Upper lobe of right lung (tissue), 1 donor: ENCODE measurements at regions of chr2 and their contacts with region 1.

Region 1: DNA sequence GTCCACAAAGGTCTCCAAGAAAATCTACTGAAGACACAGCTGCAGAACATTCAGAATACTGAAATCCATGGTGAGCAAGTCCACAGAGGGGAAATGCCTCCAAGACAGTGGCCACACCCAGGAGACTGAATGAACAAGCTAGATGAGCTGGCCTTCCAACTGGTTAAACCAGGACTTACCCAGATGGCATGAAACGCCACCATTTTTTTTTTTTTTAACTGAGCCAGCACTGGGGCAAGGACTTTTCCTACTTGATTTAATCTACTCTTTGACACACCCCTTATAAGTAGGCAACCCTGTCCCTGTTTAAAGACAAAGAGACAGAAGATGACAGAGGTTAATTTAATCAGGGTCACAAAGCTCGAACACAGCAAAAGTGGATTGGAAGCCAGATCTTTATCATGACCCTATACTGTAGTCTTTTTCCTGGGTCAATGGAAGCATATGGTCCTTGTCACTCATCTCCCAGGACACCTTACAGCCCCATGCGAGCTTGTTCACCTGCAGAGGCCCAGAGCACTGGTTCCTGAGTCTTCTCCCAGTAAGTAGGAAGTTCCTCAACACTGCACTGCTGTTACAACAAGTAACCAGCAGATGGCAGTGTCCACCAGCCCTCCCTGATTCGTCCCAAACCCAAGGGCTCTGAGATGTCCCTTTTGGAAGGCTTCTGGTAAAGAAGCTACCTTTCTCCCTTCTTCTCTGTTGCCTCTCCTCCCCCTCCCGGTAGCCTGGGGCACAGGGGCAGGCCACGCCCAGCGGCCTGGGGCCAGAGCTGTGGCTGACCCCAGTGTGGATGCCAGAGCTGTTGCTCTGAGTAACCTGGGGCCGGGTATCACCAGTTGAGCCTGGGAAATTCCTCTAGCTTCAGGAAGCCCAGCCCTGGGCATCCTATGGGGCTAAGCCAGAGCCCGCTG is 5.6 kb upstream of the GDF7 start:
- DNase-seq: peak; percentile 72
- ATAC-seq: peak; percentile 92
- H3K4me3 ChIP-seq: no peak overlapping the region
- H3K27ac ChIP-seq: no peak overlapping the region
- H3K4me1 ChIP-seq: peaks cover 9% of the 10 kb centered on the region
- H3K27me3 ChIP-seq: peaks cover 46% of the 10 kb centered on the region
- CTCF ChIP-seq: peak; percentile 99

Region 2: GRCh38 chr2:20962939-20963557 is 301.7 kb after region 1 on chr2:
- intact Hi-C with region 1: loop called (anchors 5 kb)
- DNase-seq: peak; percentile 76
- ATAC-seq: peak; percentile 93
- H3K4me3 ChIP-seq: no peak overlapping the region
- H3K27ac ChIP-seq: no peak overlapping the region
- H3K4me1 ChIP-seq: no peaks in the 10 kb centered on the region
- H3K27me3 ChIP-seq: peaks cover 8% of the 10 kb centered on the region
- CTCF ChIP-seq: peak; percentile 89

Region 3: DNA sequence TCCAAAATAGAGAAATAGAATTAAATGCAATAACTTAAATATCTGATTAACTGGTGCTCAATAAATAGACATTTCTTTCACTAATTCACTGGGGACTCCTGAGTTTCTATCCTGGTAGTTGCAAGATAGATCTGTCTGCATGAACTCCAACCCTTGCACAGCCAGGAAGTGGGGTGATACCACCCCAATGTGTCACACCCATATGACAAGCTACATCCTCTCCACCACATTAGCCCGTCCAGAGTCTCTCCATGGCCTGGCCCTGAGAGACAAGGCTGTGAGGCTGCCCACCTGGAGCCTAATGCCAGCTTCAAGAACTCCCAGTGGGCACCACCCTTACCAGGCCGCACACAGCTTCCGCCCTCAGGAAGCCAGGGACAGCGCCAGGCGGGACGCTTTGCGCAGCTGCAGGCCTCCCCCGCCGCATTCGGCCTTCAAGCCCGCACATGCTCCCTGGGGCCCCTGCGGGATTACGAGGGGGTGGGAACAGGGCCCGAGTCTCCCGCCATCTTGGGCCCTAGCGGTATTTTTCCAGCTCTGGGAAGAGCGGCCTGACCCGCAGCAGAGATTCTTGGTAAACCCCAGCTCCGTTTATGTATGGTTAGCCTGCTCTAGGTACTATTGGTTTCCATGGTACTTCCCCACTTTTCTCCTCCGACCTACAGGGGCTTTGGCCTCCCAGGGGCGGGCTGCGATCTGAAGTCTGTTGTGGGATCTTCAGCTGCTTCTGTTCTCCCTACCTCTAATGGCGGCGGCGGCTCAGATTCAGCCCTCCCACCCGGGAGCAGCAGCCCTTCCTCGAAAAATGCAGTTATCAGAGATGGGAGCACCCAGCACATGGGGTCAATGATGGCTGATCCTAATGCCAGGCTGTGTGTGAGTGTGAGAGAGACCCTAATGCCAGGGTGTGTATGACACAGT is 462.4 kb after region 1 on chr2 and contains the start of gene TDRD15:
- intact Hi-C with region 1: loop called (anchors 5 kb)
- DNase-seq: no peak
- ATAC-seq: no peak
- H3K4me3 ChIP-seq: no peak within 1 kb of the TSS
- H3K27ac ChIP-seq: no peak within 1 kb of the TSS
- H3K4me1 ChIP-seq: no peaks in the 10 kb centered on the region
- H3K27me3 ChIP-seq: peaks cover 4% of the 10 kb centered on the region
- CTCF ChIP-seq: no peak
- total RNA-seq, gene TDRD15: not detected

Region 4: GRCh38 chr2:21231985-21232384 is 570.7 kb after region 1 on chr2:
- intact Hi-C with region 1: no loop called
- DNase-seq: no peak
- ATAC-seq: peak; percentile 69
- H3K4me3 ChIP-seq: no peak overlapping the region
- H3K27ac ChIP-seq: no peak overlapping the region
- H3K4me1 ChIP-seq: no peaks in the 10 kb centered on the region
- H3K27me3 ChIP-seq: no peaks in the 10 kb centered on the region
- CTCF ChIP-seq: no peak